Activated CD8-positive, alpha-beta T cell treated with anti-CD3 and anti-CD28 coated beads for 36 hours (primary cell): ENCODE measurements at regions of chr17 and their contacts with region 1.

Region 1: DNA sequence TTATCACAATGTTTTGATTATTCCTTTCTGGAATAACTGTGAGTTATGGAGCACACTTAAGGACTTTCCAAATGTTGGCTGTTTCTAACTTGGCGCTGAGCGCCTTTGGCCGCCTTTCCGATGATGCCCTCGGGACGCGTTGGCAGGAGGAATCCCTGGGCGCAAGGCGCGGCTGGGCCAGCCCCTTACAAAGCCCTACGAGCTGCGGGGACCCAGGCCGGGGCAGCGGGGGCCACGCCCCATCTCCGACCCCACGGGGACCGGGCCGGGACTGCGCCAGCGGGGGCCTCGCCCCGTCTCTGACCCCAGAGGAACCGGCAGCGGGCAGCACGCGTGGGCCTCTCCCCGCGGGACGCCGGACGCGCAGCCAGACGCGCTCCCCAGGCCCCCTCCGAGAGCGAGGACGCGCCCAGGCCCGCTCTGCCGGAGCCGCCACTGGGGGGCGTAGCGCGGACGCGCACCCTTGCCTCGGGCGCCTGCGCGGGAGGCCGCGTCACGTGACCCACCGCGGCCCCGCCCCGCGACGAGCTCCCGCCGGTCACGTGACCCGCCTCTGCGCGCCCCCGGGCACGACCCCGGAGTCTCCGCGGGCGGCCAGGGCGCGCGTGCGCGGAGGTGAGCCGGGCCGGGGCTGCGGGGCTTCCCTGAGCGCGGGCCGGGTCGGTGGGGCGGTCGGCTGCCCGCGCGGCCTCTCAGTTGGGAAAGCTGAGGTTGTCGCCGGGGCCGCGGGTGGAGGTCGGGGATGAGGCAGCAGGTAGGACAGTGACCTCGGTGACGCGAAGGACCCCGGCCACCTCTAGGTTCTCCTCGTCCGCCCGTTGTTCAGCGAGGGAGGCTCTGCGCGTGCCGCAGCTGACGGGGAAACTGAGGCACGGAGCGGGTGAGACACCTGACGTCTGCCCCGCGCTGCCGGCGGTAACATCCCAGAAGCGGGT is at the start of gene GAA:
- DNase-seq: peak; percentile 86
- ATAC-seq: peak; percentile 89
- H3K4me3 Mint-ChIP-seq: peak within 1 kb of the TSS; percentile 88
- H3K27ac Mint-ChIP-seq: peak within 1 kb of the TSS; percentile 79
- H3K4me1 Mint-ChIP-seq: peaks cover 29% of the 10 kb centered on the region
- H3K27me3 Mint-ChIP-seq: no peaks in the 10 kb centered on the region
- CTCF ChIP-seq: peak; percentile 89
- total RNA-seq, gene GAA: 42.6 to 46.2 TPM

Region 2: GRCh38 chr17:79942591-79943346 is 158.5 kb before region 1 on chr17:
- CTCF ChIA-PET with region 1: no interaction called
- POLR2A ChIA-PET with region 1: no interaction called
- intact Hi-C with region 1: no loop called
- DNase-seq: peak; percentile 71
- ATAC-seq: peak; percentile 90
- H3K4me3 Mint-ChIP-seq: peak overlapping the region; percentile 23
- H3K27ac Mint-ChIP-seq: peak overlapping the region; percentile 63
- H3K4me1 Mint-ChIP-seq: peaks cover 14% of the 10 kb centered on the region
- H3K27me3 Mint-ChIP-seq: no peaks in the 10 kb centered on the region
- CTCF ChIP-seq: no peak

Region 3: GRCh38 chr17:80053102-80053501 is 48.2 kb before region 1 on chr17:
- CTCF ChIA-PET with region 1: no interaction called
- POLR2A ChIA-PET with region 1: no interaction called
- intact Hi-C with region 1: no loop called
- DNase-seq: no peak
- ATAC-seq: no peak
- H3K4me3 Mint-ChIP-seq: no peak overlapping the region
- H3K27ac Mint-ChIP-seq: no peak overlapping the region
- H3K4me1 Mint-ChIP-seq: no peaks in the 10 kb centered on the region
- H3K27me3 Mint-ChIP-seq: no peaks in the 10 kb centered on the region
- CTCF ChIP-seq: no peak

Region 4: DNA sequence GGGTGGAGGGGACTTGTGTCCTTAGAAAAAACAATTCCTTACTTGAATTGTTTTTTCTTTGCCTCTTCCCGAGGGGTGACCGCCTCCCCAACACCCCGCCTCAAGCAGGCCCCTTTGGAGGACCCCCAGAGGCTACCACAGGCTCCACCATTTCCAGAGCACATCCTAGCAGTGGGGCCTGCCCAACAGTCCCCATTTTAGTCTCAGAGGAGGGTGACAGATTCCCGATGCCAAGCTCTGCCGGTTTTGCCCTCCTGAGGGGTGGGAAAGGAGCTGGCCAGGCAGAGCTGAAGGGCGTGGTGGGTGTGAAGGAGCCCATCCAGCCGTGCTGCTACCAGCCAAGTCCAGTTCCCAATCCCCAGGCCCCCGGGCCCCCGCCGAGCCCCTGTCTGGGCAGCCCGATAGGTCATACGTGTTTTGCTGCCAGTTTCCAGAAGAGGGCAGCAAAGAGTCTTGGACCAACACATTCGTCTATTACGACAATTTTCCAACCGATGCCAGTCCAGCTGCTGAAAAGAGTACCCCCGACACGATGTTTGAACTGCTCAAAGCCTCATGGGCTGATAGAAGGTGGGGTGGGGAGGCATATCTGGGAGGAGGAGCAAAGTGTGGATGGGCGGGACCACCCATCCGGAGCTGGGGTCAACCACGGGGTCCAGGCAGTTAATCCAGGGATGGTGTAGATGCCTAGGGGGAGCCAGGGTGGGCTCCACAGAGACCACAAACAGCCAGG is 18.7 kb before region 1 on chr17:
- CTCF ChIA-PET with region 1: interaction called, 23 read pairs
- POLR2A ChIA-PET with region 1: interaction called, 4 read pairs
- intact Hi-C with region 1: no loop called
- DNase-seq: peak; percentile 79
- ATAC-seq: peak; percentile 91
- H3K4me3 Mint-ChIP-seq: no peak overlapping the region
- H3K27ac Mint-ChIP-seq: peak overlapping the region; percentile 52
- H3K4me1 Mint-ChIP-seq: peaks cover 3% of the 10 kb centered on the region
- H3K27me3 Mint-ChIP-seq: no peaks in the 10 kb centered on the region
- CTCF ChIP-seq: peak; percentile 88

Region 5: DNA sequence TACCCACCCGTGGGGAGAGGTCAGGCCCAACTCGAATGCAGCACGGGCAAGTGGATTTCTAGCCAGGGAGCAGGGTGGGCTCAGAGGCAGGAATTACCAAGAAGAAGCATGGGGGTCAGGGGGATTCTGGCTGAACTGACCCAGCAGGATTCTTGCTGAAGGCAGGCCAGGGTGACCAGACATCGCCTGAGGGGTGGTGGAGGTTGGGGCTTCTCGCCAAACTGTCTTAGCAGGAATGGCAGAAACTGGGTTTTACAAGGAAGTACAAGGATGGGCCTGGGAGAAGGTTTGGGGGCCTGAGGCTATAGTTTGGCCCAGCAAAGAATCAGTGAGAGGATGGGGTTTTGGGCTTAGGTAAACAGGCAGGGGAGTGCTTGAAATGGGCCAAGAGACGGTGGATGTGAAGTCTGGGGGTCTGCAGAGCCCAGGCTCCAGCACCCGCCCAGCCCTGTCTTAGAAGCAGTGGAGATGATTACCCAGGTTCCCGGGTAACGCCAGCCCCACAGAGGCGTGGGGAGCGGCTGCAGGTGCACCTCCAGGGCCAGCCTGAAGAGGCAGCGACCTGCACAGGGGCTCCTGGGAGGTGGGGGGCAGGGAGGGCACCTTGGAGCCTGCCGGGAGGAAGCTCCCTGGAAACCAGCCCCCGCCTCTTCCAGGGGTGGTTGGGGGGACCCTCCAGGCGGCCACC is 10.2 kb after region 1 on chr17:
- CTCF ChIA-PET with region 1: interaction called, 11 read pairs
- POLR2A ChIA-PET with region 1: interaction called, 5 read pairs
- intact Hi-C with region 1: no loop called
- DNase-seq: no peak
- ATAC-seq: no peak
- H3K4me3 Mint-ChIP-seq: no peak overlapping the region
- H3K27ac Mint-ChIP-seq: no peak overlapping the region
- H3K4me1 Mint-ChIP-seq: no peaks in the 10 kb centered on the region
- H3K27me3 Mint-ChIP-seq: no peaks in the 10 kb centered on the region
- CTCF ChIP-seq: no peak

Region 6: DNA sequence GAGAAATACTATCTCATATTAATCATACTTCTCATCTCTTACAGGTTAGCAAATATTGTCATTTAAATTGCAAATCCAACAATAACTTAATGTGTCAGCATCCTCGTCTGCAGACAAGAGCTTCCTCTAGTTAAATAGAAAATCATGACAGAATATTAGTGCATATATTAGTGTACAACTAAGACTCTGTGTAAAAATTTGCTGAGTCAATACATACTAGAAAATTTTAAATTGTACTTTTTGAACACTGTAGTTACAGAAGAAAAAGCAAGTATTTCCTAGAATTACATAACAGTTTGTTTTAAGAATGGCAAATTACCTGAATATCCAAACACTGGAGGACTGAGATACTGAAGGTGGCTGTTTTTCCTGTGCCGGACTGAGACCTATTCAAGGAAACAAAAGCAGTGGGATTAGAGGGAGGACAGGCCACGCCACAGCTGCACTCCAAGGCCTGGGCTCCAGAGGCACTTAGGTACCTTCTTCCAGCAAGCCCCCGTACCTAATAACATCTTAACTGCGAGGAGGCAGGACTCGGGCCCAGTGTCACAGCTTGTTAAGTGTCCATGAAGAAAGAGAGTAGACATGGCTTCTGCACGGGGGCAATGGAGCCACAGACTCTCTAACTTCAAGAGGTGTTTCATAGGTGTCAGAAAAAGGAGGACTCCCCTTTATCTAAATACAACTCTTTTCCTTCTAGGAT is 40.3 kb after region 1 on chr17:
- CTCF ChIA-PET with region 1: interaction called, 18 read pairs
- POLR2A ChIA-PET with region 1: interaction called, 14 read pairs
- intact Hi-C with region 1: no loop called
- DNase-seq: no peak
- ATAC-seq: no peak
- H3K4me3 Mint-ChIP-seq: no peak overlapping the region
- H3K27ac Mint-ChIP-seq: no peak overlapping the region
- H3K4me1 Mint-ChIP-seq: peaks cover 31% of the 10 kb centered on the region
- H3K27me3 Mint-ChIP-seq: no peaks in the 10 kb centered on the region
- CTCF ChIP-seq: no peak